ENCODE measurements at regions of chr3 and their contacts with region 1.

Region 1: DNA sequence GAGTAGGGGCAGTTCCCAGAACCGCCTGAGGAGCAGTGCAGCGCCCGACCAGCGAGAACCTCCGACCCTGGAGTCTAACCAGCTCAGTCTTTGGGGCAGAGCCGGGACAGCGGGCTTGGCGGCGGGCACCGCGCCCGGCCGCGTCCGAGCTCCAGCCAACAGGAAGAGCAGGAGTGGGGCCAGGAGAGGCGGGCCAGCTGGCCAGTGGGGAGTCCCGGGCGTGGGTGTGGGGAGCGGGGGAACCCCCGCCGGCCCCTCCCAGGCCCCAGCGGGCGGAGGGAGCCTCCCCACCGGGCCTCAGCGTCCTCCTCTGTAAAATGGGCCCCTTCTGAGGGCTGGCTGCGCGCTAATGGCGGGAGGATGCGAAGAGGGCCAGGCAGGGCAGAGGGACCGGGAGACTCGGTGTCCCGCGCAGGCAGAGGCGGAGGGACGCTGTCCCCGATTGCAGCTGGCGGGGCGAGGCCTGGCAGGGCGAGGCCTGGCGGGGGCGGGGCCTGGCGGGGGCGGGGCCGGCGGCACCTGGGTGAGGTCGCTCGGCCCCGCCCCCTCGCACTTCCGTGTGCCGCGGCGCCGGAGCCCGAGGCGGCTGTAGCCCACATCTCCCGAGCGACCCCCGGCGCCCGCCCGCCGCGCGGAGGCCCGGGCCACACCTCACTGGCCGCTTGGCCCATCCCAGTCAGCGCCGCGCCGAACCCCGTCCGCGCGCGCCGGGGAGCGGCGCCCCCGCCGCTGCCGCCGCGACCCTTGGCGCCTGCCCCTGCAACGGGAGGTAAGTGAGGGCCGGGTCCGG is at the start of gene PRKCD:
- DNase-seq: peak; percentile 77
- ATAC-seq: peak; percentile 66
- H3K4me3 Mint-ChIP-seq: peak within 1 kb of the TSS; percentile 87
- H3K27ac Mint-ChIP-seq: peak within 1 kb of the TSS; percentile 89
- H3K4me1 Mint-ChIP-seq: peaks cover 58% of the 10 kb centered on the region
- H3K27me3 Mint-ChIP-seq: peaks cover 2% of the 10 kb centered on the region
- CTCF ChIP-seq: no peak
- total RNA-seq, gene PRKCD: 60.4 and 63.9 TPM in 2 replicates

Region 2: DNA sequence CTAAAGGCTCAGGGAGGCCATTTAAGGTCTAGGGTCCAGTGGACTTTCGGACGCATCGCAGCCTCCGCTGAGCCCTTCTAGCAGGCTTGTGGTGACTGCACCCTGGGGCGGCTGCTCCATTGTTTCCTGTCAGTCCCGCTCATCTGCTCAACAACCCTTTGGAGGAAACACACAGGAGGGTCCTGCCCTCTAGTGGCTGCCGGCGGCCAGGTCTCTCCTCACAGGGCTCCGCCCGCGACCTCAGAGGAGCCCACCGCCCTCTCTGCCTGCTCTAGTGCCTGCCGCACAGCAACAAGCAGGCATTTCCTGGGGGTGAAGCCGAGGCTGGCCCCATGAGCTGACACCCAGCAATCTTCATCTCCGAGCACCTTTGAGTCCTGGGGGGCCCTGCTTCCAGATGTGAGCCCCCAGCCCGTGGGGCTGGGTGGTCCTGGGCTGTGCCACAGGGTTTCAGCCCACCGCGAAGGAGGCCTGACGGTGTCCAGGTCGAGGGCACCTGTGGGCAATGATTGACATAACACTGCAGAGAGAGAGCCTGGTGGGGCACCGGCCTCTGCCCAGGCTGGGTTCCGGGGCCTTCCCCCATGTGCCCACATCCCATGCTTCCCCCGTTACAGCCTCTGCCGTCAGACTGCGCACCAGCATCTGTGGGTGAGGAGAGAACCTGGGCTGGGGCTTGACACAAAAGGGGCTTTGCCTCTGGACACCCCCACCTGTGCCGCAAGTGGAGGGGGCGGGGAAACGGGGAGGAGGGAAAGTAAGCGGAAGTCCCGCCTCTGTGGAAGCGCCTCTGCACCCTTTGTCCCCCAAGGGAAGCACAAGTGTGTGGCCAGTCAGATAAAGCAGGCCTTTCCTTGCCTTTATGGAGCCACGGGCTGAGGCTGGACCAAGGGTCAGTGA is 88.0 kb before region 1 on chr3:
- CTCF ChIA-PET with region 1: no interaction called
- POLR2A ChIA-PET with region 1: no interaction called
- intact Hi-C with region 1: no loop called
- DNase-seq: peak; percentile 76
- ATAC-seq: peak; percentile 94
- H3K4me3 Mint-ChIP-seq: peak overlapping the region; percentile 92
- H3K27ac Mint-ChIP-seq: peak overlapping the region; percentile 89
- H3K4me1 Mint-ChIP-seq: peaks cover 13% of the 10 kb centered on the region
- H3K27me3 Mint-ChIP-seq: no peaks in the 10 kb centered on the region
- CTCF ChIP-seq: peak; percentile 39

Region 3: GRCh38 chr3:53109891-53110771 is 50.7 kb before region 1 on chr3:
- CTCF ChIA-PET with region 1: no interaction called
- POLR2A ChIA-PET with region 1: no interaction called
- intact Hi-C with region 1: no loop called
- DNase-seq: no peak
- ATAC-seq: no peak
- H3K4me3 Mint-ChIP-seq: no peak overlapping the region
- H3K27ac Mint-ChIP-seq: no peak overlapping the region
- H3K4me1 Mint-ChIP-seq: no peaks in the 10 kb centered on the region
- H3K27me3 Mint-ChIP-seq: no peaks in the 10 kb centered on the region
- CTCF ChIP-seq: no peak

Region 4: GRCh38 chr3:53180305-53181023 is 19.6 kb after region 1 on chr3:
- CTCF ChIA-PET with region 1: interaction called, 10 read pairs
- POLR2A ChIA-PET with region 1: interaction called, 105 read pairs
- intact Hi-C with region 1: loop called (anchors 1 kb)
- DNase-seq: peak; percentile 60
- ATAC-seq: peak; percentile 97
- H3K4me3 Mint-ChIP-seq: peak overlapping the region; percentile 70
- H3K27ac Mint-ChIP-seq: peak overlapping the region; percentile 80
- H3K4me1 Mint-ChIP-seq: peaks cover 57% of the 10 kb centered on the region
- H3K27me3 Mint-ChIP-seq: no peaks in the 10 kb centered on the region
- CTCF ChIP-seq: no peak

Region 5: GRCh38 chr3:53219895-53220483 is 59.1 kb after region 1 on chr3:
- CTCF ChIA-PET with region 1: no interaction called
- POLR2A ChIA-PET with region 1: no interaction called
- intact Hi-C with region 1: no loop called
- DNase-seq: peak; percentile 53
- ATAC-seq: peak; percentile 81
- H3K4me3 Mint-ChIP-seq: no peak overlapping the region
- H3K27ac Mint-ChIP-seq: no peak overlapping the region
- H3K4me1 Mint-ChIP-seq: peaks cover 13% of the 10 kb centered on the region
- H3K27me3 Mint-ChIP-seq: no peaks in the 10 kb centered on the region
- CTCF ChIP-seq: no peak

Region 6: DNA sequence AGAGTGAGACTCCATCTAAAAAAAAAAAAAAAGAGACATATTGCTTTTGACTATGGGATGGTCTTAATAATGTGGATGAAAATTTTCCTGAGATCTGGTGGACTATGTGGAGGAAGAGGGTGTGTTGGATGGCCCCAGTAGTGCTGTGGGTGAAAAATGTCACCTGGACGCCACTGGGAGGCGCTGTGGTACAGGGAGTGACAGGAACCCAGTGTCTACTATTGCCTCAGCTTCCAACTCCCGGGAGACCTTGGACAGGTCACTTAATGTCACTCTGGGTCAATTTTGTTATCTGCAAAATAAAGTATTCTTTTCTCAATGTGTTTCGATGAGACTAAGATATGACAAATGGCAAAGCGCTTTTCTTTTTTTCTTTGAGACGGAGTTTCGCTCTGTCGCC is 214.2 kb after region 1 on chr3:
- CTCF ChIA-PET with region 1: no interaction called
- POLR2A ChIA-PET with region 1: no interaction called
- intact Hi-C with region 1: no loop called
- DNase-seq: peak; percentile 29
- ATAC-seq: peak; percentile 42
- H3K4me3 Mint-ChIP-seq: no peak overlapping the region
- H3K27ac Mint-ChIP-seq: no peak overlapping the region
- H3K4me1 Mint-ChIP-seq: no peaks in the 10 kb centered on the region
- H3K27me3 Mint-ChIP-seq: peaks cover 25% of the 10 kb centered on the region
- CTCF ChIP-seq: no peak

Measured in activated B cell treated with CpG ODN at 0.5 μM for 24 hours (primary cell).